CD8-positive, alpha-beta memory T cell (primary cell): ENCODE measurements at regions of chr17 and their contacts with region 1.

Region 1: DNA sequence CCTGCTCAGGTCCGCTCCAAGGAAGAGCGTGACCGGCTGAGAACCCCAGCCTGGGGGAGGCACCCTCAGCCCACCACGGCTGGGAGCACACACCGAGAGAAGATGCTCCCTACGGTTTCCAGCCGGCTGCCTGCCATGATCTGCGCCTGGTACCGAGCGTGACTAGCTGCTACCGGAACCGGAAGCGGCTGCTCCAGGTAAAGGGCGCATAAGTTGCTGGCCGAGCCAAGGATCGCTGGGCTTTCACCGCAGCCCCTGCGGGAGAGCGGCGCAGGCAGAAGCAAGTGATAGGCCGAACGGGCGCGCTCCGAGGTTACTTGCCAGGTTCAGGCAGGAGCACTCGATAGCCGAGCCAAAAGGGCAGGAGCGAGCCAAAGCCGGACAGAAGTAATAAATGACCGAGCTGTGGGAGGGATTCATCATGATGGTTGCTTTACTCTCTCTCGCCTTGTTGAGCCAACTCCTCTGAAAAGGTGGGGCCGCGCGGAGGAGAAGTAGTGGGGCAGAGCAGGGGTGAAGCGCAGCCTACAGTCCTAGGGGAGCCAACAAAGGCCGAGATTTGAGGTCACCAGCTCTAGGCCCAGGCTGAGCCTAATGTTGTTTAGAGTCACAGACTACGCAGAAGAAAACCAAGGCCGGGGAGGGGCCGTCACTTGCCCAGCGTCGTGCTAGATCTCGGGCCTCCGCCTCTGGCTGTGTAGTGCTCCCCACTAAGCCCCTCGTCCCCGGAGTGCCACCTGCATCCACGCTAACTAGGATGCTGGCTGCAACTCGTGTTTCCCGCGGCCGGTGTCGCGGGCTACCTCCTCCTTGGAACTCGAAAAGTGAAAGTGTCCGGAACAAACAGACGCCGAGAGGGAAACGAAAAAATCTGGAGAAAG is at the start of gene MRPS23:
- DNase-seq: peak; percentile 92 to 98 (median 94)
- H3K4me3 ChIP-seq: peak within 1 kb of the TSS; percentile 99
- H3K4me3 Mint-ChIP-seq: peak within 1 kb of the TSS; percentile 93 to 99 (median 97)
- H3K27ac ChIP-seq: peak within 1 kb of the TSS; percentile 96
- H3K27ac Mint-ChIP-seq: peak within 1 kb of the TSS; percentile 90 to 100 (median 99)
- H3K4me1 ChIP-seq: peaks cover 30% of the 10 kb centered on the region
- H3K4me1 Mint-ChIP-seq: peaks cover 37 to 52% (median 40%) of the 10 kb centered on the region in 3 donors
- H3K27me3 ChIP-seq: no peaks in the 10 kb centered on the region
- H3K27me3 Mint-ChIP-seq: no peaks in the 10 kb centered on the region
- total RNA-seq, gene MRPS23: 83.1 to 88.5 TPM

Region 2: GRCh38 chr17:57833179-57833939 is 16.8 kb before region 1 on chr17:
- CTCF ChIA-PET with region 1: interaction called, 11 read pairs
- POLR2A ChIA-PET with region 1: interaction called, 3 read pairs
- DNase-seq: peak; percentile 43 to 75 (median 59)
- H3K4me3 ChIP-seq: peak overlapping the region; percentile 73
- H3K4me3 Mint-ChIP-seq: no peak overlapping the region
- H3K27ac ChIP-seq: no peak overlapping the region
- H3K27ac Mint-ChIP-seq: no peak overlapping the region
- H3K4me1 ChIP-seq: peaks cover 5% of the 10 kb centered on the region
- H3K4me1 Mint-ChIP-seq: peaks cover 0 to 5% (median 0%) of the 10 kb centered on the region in 3 donors
- H3K27me3 ChIP-seq: no peaks in the 10 kb centered on the region
- H3K27me3 Mint-ChIP-seq: no peaks in the 10 kb centered on the region

Region 3: DNA sequence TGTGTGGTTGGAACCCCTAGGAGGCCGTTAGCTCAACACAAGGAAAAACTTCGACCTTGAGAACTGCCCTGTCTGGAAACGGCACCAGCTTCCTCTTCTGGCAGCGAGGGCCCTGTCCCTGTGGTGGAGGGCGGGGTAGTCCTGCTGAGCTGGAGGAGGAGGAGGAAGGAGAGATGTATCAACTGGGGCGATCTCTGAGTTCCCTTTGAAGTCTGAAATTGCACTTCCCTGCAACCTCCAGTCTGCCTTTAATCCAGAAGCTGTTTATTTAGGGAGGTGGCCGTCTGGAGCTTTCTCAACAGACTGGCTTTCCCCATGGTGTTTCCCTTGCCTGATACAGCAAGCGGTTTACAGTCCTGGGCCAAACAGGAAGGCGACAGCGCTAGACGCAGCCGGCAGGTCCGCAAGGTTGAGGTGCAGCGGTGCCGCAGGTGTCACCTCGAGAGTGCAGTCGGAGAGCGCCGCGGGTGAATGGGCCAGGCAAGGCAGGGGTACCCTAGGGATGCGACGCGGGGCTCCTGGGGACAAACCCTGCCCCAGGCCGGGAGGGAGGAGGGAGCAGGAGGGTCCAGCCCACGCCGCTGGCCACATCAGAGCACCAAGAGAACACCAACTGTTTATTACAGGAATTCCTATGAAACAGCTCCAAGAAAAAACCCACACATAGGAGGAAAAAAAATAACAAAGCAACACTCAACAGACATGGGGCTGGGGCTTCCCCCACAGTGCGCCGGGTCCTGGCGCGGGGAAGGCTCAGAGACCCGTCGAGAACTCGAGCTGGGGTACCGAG is 11.1 kb after region 1 on chr17:
- CTCF ChIA-PET with region 1: interaction called, 19 read pairs
- POLR2A ChIA-PET with region 1: interaction called, 12 read pairs
- DNase-seq: peak; percentile 6 to 58 (median 22)
- H3K4me3 ChIP-seq: peak overlapping the region; percentile 14
- H3K4me3 Mint-ChIP-seq: peak overlapping the region; percentile 25 to 84 (median 79)
- H3K27ac ChIP-seq: no peak overlapping the region
- H3K27ac Mint-ChIP-seq: peak overlapping the region in 4 of 8 donors; percentile 47 to 93 (median 62)
- H3K4me1 ChIP-seq: peaks cover 13% of the 10 kb centered on the region
- H3K4me1 Mint-ChIP-seq: peaks cover 10 to 17% (median 11%) of the 10 kb centered on the region in 3 donors
- H3K27me3 ChIP-seq: peaks cover 4% of the 10 kb centered on the region
- H3K27me3 Mint-ChIP-seq: peaks cover 24 to 40% of the 10 kb centered on the region in 2 donors

Region 4: GRCh38 chr17:58006924-58007780 is 157.0 kb after region 1 on chr17 and contains the start of gene SRSF1:
- CTCF ChIA-PET with region 1: no interaction called
- POLR2A ChIA-PET with region 1: interaction called, 31 read pairs
- DNase-seq: peak; percentile 95 to 99 (median 98)
- H3K4me3 ChIP-seq: peak within 1 kb of the TSS; percentile 86
- H3K4me3 Mint-ChIP-seq: peak within 1 kb of the TSS; percentile 99 to 100 (median 100)
- H3K27ac ChIP-seq: peak within 1 kb of the TSS; percentile 96
- H3K27ac Mint-ChIP-seq: peak within 1 kb of the TSS; percentile 95 to 100 (median 99)
- H3K4me1 ChIP-seq: peaks cover 39% of the 10 kb centered on the region
- H3K4me1 Mint-ChIP-seq: peaks cover 48 to 59% (median 56%) of the 10 kb centered on the region in 3 donors
- H3K27me3 ChIP-seq: no peaks in the 10 kb centered on the region
- H3K27me3 Mint-ChIP-seq: peaks cover 0 to 10% of the 10 kb centered on the region in 2 donors
- total RNA-seq, gene SRSF1: 469 to 492 TPM